Activated CD4-positive, alpha-beta T cell treated with anti-CD3 and anti-CD28 coated beads for 36 hours (primary cell): ENCODE measurements at regions of chr4 and their contacts with region 1.

Region 1: DNA sequence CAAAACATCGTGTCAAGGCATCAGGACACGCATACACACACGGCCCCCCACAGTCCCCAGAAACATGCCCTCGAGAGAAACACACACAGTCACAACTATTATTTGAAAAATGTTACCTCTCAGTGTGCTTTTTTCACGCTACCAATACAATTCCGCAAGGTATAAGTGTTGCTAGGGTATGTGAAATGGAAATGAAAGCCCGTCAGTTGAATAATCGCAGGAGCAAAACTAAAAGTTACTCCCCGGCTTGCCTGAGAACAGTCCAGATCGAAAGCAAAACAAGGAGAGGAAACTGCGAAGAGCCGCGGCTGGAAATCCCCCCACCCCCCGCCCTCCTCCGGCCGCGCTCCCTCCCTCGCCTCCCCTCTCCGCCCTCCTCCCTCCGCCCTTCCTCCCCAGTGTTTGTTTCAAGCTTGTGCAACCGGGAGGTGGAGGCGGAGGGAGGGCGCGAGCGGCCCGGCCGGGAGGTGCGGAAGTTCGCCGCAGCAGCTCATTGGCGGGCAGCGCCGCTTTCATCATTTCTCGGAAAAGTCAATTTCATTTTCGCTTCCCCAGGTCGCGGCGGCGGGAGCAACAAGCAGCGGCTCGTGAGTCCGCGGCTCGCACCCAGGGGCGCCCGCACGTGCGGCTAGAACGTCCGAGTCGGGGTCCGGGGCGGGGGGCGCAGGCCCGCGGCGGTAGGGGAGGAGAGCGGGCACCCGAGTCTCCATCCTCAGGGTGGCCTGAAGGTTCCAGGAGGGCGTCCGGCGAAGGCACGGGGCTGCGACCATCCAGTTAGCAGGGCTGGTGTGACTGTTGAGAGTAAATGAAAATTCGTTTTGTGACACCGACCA is at the start of gene IRF2:
- DNase-seq: peak; percentile 99
- ATAC-seq: peak; percentile 76
- H3K4me3 Mint-ChIP-seq: peak within 1 kb of the TSS; percentile 88
- H3K27ac Mint-ChIP-seq: peak within 1 kb of the TSS; percentile 94
- H3K4me1 Mint-ChIP-seq: peaks cover 59% of the 10 kb centered on the region
- H3K27me3 Mint-ChIP-seq: no peaks in the 10 kb centered on the region
- total RNA-seq, gene IRF2: 50.1 to 68.9 TPM

Region 2: DNA sequence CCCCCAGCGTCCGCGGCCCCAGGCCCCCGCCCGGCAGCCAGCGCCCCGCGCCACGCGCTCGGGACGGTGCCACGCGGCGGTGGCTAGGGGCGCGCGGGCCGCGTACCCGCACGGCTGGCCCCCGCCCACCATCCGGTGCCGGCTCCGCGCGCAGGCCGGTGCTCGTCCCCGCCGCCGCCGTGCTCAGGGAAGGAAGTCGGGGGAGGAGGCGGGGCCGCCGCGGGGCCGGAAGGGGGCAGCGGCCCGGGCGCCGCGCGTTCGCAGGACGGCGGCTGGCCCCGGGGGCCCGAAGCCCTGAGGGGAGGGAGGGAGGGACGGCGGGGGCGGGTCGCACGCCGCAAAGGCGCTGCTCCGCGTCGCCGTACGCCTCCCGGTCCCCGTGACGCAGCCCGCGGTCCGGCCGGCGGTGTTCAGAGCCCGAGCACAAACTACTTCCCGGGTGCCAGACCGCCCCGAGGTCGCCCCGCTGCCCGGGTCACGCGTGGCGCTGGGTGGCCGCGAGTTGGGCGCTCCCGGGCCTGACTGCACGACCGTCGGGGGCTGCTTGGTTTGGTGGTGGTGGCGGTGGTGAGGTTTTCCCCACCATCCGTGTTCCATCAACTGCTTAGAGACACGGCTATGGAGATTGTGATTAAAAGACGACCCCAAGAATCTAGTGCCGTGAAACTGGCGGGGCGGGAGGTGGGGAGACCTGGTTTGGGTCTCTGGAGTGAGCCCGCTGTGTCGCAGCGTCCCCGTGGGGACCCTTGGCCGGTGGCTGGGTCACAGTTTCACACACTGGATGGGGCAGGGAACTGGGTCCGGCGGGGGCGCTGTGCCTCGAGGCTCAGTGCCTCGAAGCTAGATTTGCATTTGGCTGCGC is 1557.1 kb before region 1 on chr4 and contains the start of gene DCTD:
- CTCF ChIA-PET with region 1: no interaction called
- POLR2A ChIA-PET with region 1: no interaction called
- intact Hi-C with region 1: loop called in 1 of 2 experiments (anchors 10 kb)
- DNase-seq: peak; percentile 89
- ATAC-seq: peak; percentile 69
- H3K4me3 Mint-ChIP-seq: peak within 1 kb of the TSS; percentile 79
- H3K27ac Mint-ChIP-seq: peak within 1 kb of the TSS; percentile 95
- H3K4me1 Mint-ChIP-seq: peaks cover 48% of the 10 kb centered on the region
- H3K27me3 Mint-ChIP-seq: no peaks in the 10 kb centered on the region
- total RNA-seq, gene DCTD: 119 to 128 TPM

Region 3: DNA sequence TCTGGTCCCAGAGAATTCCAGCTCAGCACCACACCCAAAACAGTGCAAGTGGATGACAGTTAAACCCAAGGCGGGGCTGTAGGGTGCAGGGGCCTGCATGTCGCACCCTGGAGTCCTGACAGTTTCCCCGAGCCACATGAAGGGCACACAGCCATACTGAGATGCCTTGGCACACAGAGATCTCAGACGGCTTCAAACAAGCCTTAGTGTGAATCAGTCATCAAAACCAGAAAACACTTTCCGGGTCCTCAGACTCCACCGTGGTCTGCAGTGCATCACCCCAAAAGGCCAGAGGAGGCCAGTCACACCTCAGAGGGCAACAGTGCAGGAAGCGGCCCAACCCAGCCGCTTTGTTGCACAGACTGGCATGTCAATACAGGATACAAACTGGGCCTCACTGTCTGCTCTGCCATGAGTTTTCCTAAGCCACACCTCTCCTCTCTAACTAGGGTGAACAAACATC is 192.2 kb before region 1 on chr4:
- CTCF ChIA-PET with region 1: no interaction called
- POLR2A ChIA-PET with region 1: interaction called, 9 read pairs
- intact Hi-C with region 1: loop called (anchors 1 to 2 kb)
- DNase-seq: peak; percentile 82
- ATAC-seq: peak; percentile 74
- H3K4me3 Mint-ChIP-seq: peak overlapping the region; percentile 56
- H3K27ac Mint-ChIP-seq: peak overlapping the region; percentile 93
- H3K4me1 Mint-ChIP-seq: peaks cover 65% of the 10 kb centered on the region
- H3K27me3 Mint-ChIP-seq: peaks cover 4% of the 10 kb centered on the region

Region 4: GRCh38 chr4:184417802-184418511 is 56.5 kb before region 1 on chr4:
- CTCF ChIA-PET with region 1: interaction called, 4 read pairs
- POLR2A ChIA-PET with region 1: interaction called, 7 read pairs
- intact Hi-C with region 1: loop called (anchors 1 kb)
- DNase-seq: peak; percentile 22
- ATAC-seq: peak; percentile 73
- H3K4me3 Mint-ChIP-seq: no peak overlapping the region
- H3K27ac Mint-ChIP-seq: peak overlapping the region; percentile 64
- H3K4me1 Mint-ChIP-seq: peaks cover 90% of the 10 kb centered on the region
- H3K27me3 Mint-ChIP-seq: no peaks in the 10 kb centered on the region

Region 5: DNA sequence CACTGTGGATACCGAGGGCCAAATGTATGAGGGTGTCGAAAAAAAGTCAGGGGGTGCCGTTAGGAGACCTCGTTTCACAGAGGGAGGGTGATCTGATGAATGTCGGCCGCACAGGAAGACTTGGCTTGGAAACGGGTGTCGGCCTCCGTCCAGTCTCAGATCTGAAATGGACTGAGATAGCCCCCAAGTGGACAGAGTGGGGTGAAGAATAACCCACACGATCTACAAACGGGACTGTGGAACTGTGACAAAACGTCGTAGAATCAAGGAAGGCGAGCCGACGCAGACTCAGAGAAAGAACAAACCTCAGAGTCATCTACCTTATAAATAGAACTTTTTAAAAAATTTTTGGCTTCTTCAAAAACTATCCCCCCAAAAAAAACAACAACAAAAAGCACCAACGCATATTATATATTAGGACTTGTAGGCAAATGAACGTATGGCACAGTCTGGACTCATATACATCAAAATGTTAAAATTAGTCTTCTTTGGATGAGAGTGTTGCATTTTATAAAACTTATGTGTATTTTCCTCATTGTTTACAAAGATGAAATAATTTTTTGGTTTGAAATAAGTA is 63.6 kb after region 1 on chr4:
- CTCF ChIA-PET with region 1: interaction called, 5 read pairs
- POLR2A ChIA-PET with region 1: interaction called, 14 read pairs
- intact Hi-C with region 1: loop called (anchors 1 kb)
- DNase-seq: peak; percentile 69
- ATAC-seq: peak; percentile 43
- H3K4me3 Mint-ChIP-seq: peak overlapping the region; percentile 92
- H3K27ac Mint-ChIP-seq: peak overlapping the region; percentile 95
- H3K4me1 Mint-ChIP-seq: peaks cover 45% of the 10 kb centered on the region
- H3K27me3 Mint-ChIP-seq: no peaks in the 10 kb centered on the region

Region 6: DNA sequence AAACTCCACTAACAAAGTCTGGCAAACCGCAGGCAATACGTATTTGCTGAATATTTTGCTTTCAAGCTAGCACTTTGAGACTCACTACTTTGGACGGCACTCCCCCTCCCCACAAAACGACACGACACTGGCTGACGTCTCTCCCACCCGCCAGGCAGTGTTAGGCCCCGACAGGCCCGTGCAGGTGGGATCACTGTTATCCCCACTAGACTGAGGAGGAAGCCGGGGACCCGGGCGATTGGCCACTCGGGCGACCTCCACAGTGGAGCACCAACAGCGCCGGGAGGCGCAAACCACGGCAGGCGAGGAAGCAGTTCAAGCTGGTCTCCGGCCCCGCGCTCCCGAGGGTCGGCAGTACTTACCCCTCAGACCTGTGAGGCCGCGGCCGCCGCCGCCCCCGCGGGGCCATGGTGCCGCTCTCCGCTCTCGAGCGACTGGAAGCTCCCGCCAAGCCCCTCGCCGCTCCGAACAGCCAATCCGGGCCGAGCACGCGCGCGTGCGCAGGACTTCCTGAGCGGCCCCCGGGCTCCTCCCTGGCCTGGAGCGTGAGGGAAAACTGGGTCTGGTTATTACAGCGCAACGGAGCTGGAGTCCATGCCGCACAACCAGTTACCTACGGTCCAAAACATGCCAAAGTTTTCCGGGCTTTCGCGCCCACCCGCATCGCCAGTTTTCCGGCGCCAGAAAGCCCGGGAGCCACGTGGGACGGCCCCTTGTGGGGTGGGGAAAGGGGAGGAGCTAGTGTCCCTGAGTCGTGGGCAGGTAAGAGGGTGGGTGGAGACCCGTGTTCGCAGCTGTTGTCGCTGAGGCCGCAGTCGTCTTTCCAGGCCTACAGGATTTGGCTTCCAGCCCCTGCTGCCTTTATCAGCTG is 259.4 kb after region 1 on chr4 and contains the start of gene CENPU:
- CTCF ChIA-PET with region 1: interaction called, 3 read pairs
- POLR2A ChIA-PET with region 1: interaction called, 14 read pairs
- intact Hi-C with region 1: loop called (anchors 1 to 5 kb)
- DNase-seq: peak; percentile 98
- ATAC-seq: peak; percentile 95
- H3K4me3 Mint-ChIP-seq: peak within 1 kb of the TSS; percentile 98
- H3K27ac Mint-ChIP-seq: peak within 1 kb of the TSS; percentile 94
- H3K4me1 Mint-ChIP-seq: peaks cover 24% of the 10 kb centered on the region
- H3K27me3 Mint-ChIP-seq: no peaks in the 10 kb centered on the region
- total RNA-seq, gene CENPU: 87.7 to 88.4 TPM